B cell (primary cell): ENCODE measurements at regions of chrX and their contacts with region 1.

Region 1: GRCh38 chrX:129772796-129773431 is 6.8 kb upstream of the SASH3 start:
- DNase-seq: peak; percentile 91
- ATAC-seq: peak; percentile 71
- H3K4me3 ChIP-seq: no peak overlapping the region
- H3K4me3 Mint-ChIP-seq: peak overlapping the region; percentile 75
- H3K27ac ChIP-seq: peak overlapping the region; percentile 88 to 90
- H3K27ac Mint-ChIP-seq: peak overlapping the region; percentile 97
- H3K4me1 ChIP-seq: peaks cover 87 to 98% of the 10 kb centered on the region in 2 donors
- H3K4me1 Mint-ChIP-seq: peaks cover 72% of the 10 kb centered on the region
- H3K27me3 ChIP-seq: no peaks in the 10 kb centered on the region
- H3K27me3 Mint-ChIP-seq: no peaks in the 10 kb centered on the region
- CTCF ChIP-seq: no peak

Region 2: GRCh38 chrX:129759576-129760061 is 13.3 kb before region 1 on chrX:
- CTCF ChIA-PET with region 1: interaction called, 11 read pairs
- POLR2A ChIA-PET with region 1: interaction called, 9 read pairs
- intact Hi-C with region 1: loop called (anchors 2 kb)
- DNase-seq: peak; percentile 39
- ATAC-seq: peak; percentile 34
- H3K4me3 ChIP-seq: no peak overlapping the region
- H3K4me3 Mint-ChIP-seq: peak overlapping the region; percentile 23
- H3K27ac ChIP-seq: peak overlapping the region; percentile 11 to 55
- H3K27ac Mint-ChIP-seq: peak overlapping the region; percentile 92
- H3K4me1 ChIP-seq: peaks cover 47 to 57% of the 10 kb centered on the region in 2 donors
- H3K4me1 Mint-ChIP-seq: peaks cover 48% of the 10 kb centered on the region
- H3K27me3 ChIP-seq: no peaks in the 10 kb centered on the region
- H3K27me3 Mint-ChIP-seq: no peaks in the 10 kb centered on the region
- CTCF ChIP-seq: no peak

Region 3: DNA sequence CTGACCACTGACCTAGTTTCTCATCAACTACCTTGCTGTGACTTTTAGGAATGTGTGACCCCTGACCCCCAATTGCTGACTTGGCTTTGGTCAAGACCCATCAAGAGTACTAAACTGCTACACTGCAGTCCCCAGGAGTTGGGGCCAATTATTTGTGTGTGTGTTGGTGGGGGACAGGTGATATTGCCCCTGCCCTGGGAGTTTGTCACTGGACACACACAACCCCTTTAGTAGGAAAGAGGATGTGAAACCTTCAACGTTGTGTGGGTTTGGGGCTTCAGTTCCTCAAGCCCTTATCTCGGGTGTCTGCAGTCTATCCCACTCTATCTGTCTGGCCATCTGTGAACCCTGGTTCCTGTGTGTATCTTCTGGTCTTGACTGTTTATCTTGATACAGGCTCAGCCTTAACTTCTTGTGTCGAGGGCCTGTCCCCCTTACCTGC is 13.3 kb after region 1 on chrX:
- CTCF ChIA-PET with region 1: interaction called, 32 read pairs
- POLR2A ChIA-PET with region 1: interaction called, 35 read pairs
- intact Hi-C with region 1: loop called (anchors 1 kb)
- DNase-seq: peak; percentile 78
- ATAC-seq: peak; percentile 73
- H3K4me3 ChIP-seq: peak overlapping the region in 4 of 5 experiments; percentile 8 to 46 (median 24)
- H3K4me3 Mint-ChIP-seq: peak overlapping the region; percentile 85
- H3K27ac ChIP-seq: peak overlapping the region; percentile 24 to 66
- H3K27ac Mint-ChIP-seq: peak overlapping the region; percentile 95
- H3K4me1 ChIP-seq: peaks cover 60 to 67% of the 10 kb centered on the region in 2 donors
- H3K4me1 Mint-ChIP-seq: peaks cover 59% of the 10 kb centered on the region
- H3K27me3 ChIP-seq: no peaks in the 10 kb centered on the region
- H3K27me3 Mint-ChIP-seq: no peaks in the 10 kb centered on the region
- CTCF ChIP-seq: no peak

Region 4: GRCh38 chrX:130468395-130468923 is 695.5 kb after region 1 on chrX:
- CTCF ChIA-PET with region 1: no interaction called
- POLR2A ChIA-PET with region 1: no interaction called
- intact Hi-C with region 1: no loop called
- DNase-seq: no peak
- ATAC-seq: no peak
- H3K4me3 ChIP-seq: no peak overlapping the region
- H3K4me3 Mint-ChIP-seq: no peak overlapping the region
- H3K27ac ChIP-seq: no peak overlapping the region
- H3K27ac Mint-ChIP-seq: no peak overlapping the region
- H3K4me1 ChIP-seq: no peaks in the 10 kb centered on the region
- H3K4me1 Mint-ChIP-seq: no peaks in the 10 kb centered on the region
- H3K27me3 ChIP-seq: peaks cover 0 to 2% (median 0%) of the 10 kb centered on the region in 4 experiments
- H3K27me3 Mint-ChIP-seq: peaks cover 4% of the 10 kb centered on the region
- CTCF ChIP-seq: no peak